ENCODE measurements at regions of chr7 and their contacts with region 1.

Region 1: GRCh38 chr7:48088559-48089045 is 463 bp upstream of the UPP1 start:
- DNase-seq: peak; percentile 73 to 95
- H3K4me3 ChIP-seq: peak overlapping the region; percentile 90 to 91
- H3K27ac ChIP-seq: peak overlapping the region; percentile 88 to 94
- H3K4me1 ChIP-seq: peaks cover 11 to 37% of the 10 kb centered on the region in 2 donors
- H3K27me3 ChIP-seq: no peaks in the 10 kb centered on the region
- CTCF ChIP-seq: no peak

Region 2: DNA sequence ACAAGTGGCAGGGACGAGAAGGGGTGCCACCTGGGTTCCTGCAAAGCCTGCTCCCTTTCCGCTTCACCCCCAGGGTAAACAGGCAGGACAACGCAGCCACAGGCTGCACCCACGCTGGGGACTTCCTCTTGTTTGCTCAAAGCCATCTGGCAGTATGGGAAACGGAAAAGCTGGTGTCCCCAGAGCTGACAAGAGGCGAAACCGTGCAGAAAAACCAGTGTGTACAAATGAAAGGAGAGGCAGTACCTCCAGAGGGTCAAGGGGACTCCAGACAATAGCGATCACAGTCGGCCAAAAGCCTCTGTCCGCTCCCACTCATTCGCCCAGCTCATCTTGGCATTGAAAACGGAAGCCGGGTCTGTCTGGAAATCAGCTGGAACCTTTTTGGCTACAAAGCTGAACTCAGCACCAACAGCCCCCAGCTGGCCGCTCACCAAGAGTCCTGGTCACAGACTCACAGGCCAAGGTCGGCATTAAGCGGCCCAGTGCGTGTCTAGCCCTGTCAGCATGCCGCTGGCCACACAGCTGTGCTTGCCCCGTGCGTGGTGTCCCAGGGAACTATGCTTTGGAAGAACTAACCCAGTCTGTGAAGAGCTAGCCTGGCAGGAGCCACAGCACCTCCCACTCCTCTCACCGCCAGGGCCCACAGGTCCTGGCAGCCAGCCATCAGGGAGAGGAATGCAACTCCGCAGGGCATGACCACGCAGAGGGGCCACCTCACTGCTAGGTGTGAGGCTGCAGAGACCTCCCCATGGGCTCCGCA is 517.1 kb before region 1 on chr7:
- intact Hi-C with region 1: loop called (anchors 5 kb)
- DNase-seq: peak in 1 of 2 donors; percentile 91
- H3K4me3 ChIP-seq: peak overlapping the region; percentile 23 to 55
- H3K27ac ChIP-seq: peak overlapping the region; percentile 85 to 86
- H3K4me1 ChIP-seq: peaks cover 27 to 56% of the 10 kb centered on the region in 2 donors
- H3K27me3 ChIP-seq: no peaks in the 10 kb centered on the region
- CTCF ChIP-seq: no peak

Region 3: GRCh38 chr7:47757921-47758411 is 330.6 kb before region 1 on chr7:
- intact Hi-C with region 1: loop called (anchors 10 kb)
- DNase-seq: peak; percentile 63 to 93
- H3K4me3 ChIP-seq: no peak overlapping the region
- H3K27ac ChIP-seq: peak overlapping the region; percentile 70 to 86
- H3K4me1 ChIP-seq: peaks cover 0 to 12% of the 10 kb centered on the region in 2 donors
- H3K27me3 ChIP-seq: no peaks in the 10 kb centered on the region
- CTCF ChIP-seq: no peak

Region 4: DNA sequence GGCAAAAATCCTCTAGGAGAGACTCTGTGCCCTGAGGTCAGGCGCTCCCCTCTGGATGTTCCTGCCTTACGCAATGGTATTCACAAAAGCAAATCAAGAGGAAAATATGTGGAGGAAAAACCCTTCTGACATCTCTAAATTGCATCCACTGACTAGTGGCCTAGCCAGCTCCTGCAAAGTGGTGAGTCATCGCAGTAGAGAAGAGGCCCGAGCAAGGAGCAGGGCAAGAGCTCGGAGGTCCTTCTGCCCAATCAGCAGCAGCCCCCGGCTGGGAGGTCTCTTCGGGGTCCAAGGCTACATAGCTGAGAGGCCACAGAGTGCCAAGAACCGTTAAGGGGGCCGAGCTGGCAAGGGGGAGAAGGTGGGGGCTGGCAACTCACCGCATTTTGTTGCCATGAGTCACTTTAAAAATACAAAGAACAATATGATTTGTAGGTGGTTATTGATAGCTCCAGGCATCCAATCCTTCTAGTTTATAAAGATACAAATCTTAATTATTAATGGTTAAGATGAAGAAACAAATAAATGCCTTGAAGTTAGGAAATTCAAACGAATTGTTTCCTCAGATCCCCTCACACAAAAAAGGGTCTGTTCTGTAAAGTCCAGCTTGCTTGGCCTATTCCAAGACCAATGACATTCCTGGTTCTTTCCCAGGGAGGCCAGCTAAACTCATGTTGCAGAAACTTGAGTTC is 301.9 kb before region 1 on chr7:
- intact Hi-C with region 1: loop called (anchors 10 kb)
- DNase-seq: peak; percentile 15 to 88
- H3K4me3 ChIP-seq: no peak overlapping the region
- H3K27ac ChIP-seq: peak overlapping the region; percentile 86 to 91
- H3K4me1 ChIP-seq: peaks cover 13 to 49% of the 10 kb centered on the region in 2 donors
- H3K27me3 ChIP-seq: no peaks in the 10 kb centered on the region
- CTCF ChIP-seq: no peak

Region 5: DNA sequence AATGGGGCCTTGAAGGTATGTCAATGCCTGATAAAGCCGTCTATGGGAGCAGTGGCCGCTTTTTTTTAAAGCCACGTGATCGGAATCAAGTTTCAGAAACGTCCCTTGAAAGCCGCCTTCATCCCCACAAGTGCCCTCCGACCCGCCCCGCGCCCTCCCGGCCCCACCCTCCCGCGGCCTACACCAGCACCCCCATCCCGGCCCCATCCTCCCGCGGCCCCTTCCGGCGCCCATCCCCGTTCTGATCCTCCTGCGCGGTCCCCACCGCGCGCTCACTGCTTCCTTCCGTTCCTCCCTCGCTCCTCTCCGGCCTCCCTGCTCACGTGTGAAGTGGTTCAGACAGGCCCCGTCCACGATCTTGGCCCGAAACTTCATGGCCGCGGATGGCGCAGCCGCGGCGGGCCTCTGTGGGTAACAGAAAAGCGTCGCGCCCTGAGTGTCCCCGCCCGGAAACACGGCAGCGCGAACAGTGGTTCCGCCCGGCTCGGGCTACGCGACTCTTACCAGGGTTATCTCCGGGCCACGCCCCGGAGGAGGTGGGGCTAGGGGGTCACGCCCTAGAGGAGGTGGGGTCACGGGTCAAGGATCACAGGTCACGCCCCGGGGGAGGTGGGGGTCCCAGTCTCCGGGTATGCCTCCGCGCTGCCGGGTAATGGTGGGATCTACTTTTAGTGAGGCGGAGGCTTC is 109.3 kb before region 1 on chr7 and contains the start of gene HUS1:
- intact Hi-C with region 1: loop called (anchors 1 kb)
- DNase-seq: peak; percentile 71 to 96
- H3K4me3 ChIP-seq: peak within 1 kb of the TSS; percentile 61 to 88
- H3K27ac ChIP-seq: peak within 1 kb of the TSS; percentile 87 to 89
- H3K4me1 ChIP-seq: peaks cover 4 to 15% of the 10 kb centered on the region in 2 donors
- H3K27me3 ChIP-seq: no peaks in the 10 kb centered on the region
- CTCF ChIP-seq: no peak
- total RNA-seq, gene HUS1: 30.4 TPM

Region 6: DNA sequence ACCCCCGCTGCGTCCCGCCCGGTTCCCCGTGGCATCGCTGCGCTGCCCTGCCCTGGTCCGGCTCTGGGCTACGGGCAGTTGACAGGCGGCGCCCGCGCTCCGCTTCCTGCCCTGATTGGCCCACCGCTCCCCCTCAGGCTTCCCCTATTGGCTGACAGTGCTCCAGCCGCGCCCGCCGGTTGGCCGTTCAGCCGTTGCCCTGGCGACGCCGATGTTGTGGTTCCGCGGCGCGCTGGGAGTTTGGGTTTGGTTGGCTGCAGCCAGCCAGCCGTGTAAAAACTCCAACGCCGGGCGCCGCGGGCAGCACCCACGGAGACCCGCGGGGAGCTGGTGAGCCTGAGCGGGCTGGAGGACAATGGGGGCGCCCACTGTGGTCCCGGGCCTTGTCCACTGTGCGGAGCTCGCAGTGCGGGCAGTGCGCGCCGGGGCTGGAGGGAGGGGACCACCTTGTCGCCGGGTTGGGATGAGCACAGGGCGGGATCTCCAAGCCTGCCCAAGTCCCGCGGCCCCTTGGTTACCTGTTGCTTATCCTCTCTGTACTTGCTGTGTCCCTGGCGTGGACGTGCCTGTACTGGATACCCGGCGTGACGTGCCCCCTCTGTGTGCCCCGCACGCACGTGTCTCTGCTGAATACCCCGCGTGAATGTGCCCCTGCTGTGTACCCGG is 53.2 kb before region 1 on chr7 and contains the start of gene C7orf57:
- intact Hi-C with region 1: loop called (anchors 2 kb)
- DNase-seq: peak; percentile 70 to 94
- H3K4me3 ChIP-seq: peak within 1 kb of the TSS; percentile 51 to 73
- H3K27ac ChIP-seq: no peak within 1 kb of the TSS
- H3K4me1 ChIP-seq: peaks cover 0 to 8% of the 10 kb centered on the region in 2 donors
- H3K27me3 ChIP-seq: no peaks in the 10 kb centered on the region
- CTCF ChIP-seq: peak in 2 of 3 experiments; percentile 51 to 53
- total RNA-seq, gene C7orf57: not detected

Region 7: DNA sequence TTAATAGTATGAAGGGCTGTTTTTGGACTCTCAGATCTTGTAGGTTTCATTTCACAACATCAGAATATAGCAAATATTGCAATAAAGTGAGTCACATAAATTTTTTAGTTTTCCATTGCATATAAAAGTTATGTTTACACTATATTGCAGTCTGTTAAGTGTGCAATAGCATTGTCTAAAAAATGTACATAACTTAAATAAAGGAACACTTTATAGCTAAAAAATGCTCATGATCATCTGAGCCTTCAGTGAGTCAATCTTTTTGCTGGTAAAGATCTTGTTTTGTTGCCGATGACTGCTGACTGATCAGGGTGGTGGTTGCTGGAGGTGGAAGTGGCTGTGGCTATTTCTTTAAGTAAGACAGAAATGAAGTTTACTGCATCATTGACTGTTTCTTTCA is 124.6 kb after region 1 on chr7:
- intact Hi-C with region 1: no loop called
- DNase-seq: no peak
- H3K4me3 ChIP-seq: no peak overlapping the region
- H3K27ac ChIP-seq: no peak overlapping the region
- H3K4me1 ChIP-seq: no peaks in the 10 kb centered on the region
- H3K27me3 ChIP-seq: no peaks in the 10 kb centered on the region
- CTCF ChIP-seq: no peak